Astrocyte of the cerebellum (primary cell): ENCODE measurements at regions of chr17 and their contacts with region 1.

Region 1: GRCh38 chr17:40100669-40101366 is 429 bp upstream of the NR1D1 start:
- DNase-seq: peak; percentile 91
- H3K4me3 ChIP-seq: peak overlapping the region; percentile 58
- CTCF ChIP-seq: no peak

Region 2: DNA sequence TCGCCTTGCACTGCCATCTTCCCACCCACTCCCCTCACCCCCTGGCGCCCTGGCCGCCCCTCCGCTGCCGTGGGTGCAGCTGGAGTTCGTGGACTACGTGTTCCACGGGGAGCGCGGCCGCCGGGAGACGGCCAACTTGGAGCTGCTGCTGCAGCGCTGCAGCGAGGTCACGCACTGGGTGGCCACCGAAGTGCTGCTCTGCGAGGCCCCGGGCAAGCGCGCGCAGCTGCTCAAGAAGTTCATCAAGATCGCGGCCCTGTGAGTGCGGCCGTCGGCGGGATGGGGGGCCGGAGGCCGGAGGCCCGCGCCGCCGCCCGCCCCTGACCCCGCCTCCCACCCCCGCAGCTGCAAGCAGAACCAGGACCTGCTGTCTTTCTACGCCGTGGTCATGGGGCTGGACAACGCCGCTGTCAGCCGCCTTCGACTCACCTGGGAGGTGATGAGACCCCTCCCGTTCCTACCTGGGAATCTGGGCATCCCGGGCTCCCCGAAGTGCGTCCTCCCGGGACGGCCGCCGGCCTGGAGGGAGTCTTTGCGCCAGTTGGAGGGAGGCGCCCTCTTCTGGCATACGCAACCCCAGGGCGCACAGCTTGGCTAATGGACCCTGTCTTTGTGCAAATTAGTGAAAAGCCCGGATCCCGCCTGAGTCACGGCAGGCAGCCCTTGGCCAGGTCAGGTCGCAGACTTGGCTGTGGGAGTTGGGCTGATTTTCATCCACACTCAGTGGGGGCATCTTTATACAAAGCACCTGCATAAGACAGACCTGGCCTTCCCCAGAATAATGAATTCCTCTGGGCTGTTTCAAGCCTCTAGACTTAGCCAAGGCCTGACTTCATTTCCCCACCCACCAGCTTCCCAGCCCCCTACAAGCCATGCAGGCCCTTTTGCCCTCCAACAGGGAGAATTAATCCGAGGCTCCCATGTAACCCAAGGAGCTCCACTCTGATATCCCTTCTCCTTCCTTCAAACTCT is 90.7 kb after region 1 on chr17:
- in situ Hi-C with region 1: loop called (anchors 5 kb)
- DNase-seq: peak; percentile 42
- H3K4me3 ChIP-seq: peak overlapping the region; percentile 39
- CTCF ChIP-seq: peak; percentile 79